SK-N-SH (cell line): ENCODE measurements at regions of chr7 and their contacts with region 1.

Region 1: GRCh38 chr7:5170251-5170650 is 19.8 kb upstream of the WIPI2 start:
- DNase-seq: no peak
- H3K4me3 ChIP-seq: no peak overlapping the region
- H3K27ac ChIP-seq: no peak overlapping the region
- H3K4me1 ChIP-seq: no peaks in the 10 kb centered on the region
- H3K27me3 ChIP-seq: no peaks in the 10 kb centered on the region
- CTCF ChIP-seq: no peak
- EP300 ChIP-seq: no peak
- RAD21 ChIP-seq: no peak

Region 2: GRCh38 chr7:4806983-4807597 is 363.2 kb before region 1 on chr7:
- CTCF ChIA-PET with region 1: no interaction called
- POLR2A ChIA-PET with region 1: no interaction called
- DNase-seq: no peak
- H3K4me3 ChIP-seq: no peak overlapping the region
- H3K27ac ChIP-seq: no peak overlapping the region
- H3K4me1 ChIP-seq: no peaks in the 10 kb centered on the region
- H3K27me3 ChIP-seq: no peaks in the 10 kb centered on the region
- CTCF ChIP-seq: no peak
- EP300 ChIP-seq: no peak
- RAD21 ChIP-seq: no peak

Region 3: GRCh38 chr7:5139998-5140397 is 30.3 kb before region 1 on chr7:
- CTCF ChIA-PET with region 1: interaction called, 51 read pairs
- POLR2A ChIA-PET with region 1: no interaction called
- DNase-seq: peak; percentile 81
- H3K4me3 ChIP-seq: no peak overlapping the region
- H3K27ac ChIP-seq: no peak overlapping the region
- H3K4me1 ChIP-seq: no peaks in the 10 kb centered on the region
- H3K27me3 ChIP-seq: peaks cover 7% of the 10 kb centered on the region; the same call in 1 of the 2 replicates
- CTCF ChIP-seq: peak; percentile 62
- EP300 ChIP-seq: no peak
- RAD21 ChIP-seq: peak; percentile 70

Region 4: DNA sequence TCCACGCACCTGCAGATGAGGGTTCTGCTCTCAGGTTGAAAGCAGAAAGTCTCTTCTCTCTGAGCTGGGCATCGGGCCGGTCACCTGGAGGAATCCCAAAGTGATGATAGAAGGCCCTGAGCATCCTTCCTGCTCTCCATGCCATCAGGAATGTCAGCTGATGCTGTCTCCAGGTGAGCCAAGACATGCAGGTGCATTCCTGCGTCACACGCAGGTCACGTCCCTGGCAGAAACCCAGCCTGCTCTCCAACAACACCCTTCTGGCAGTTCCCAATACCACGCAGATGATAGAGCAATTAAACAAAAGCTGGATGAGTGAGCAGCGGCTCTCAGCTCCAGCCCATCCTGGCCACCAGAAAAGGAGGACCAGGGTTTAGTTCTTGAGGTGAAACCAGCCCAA is 12.9 kb after region 1 on chr7:
- CTCF ChIA-PET with region 1: interaction called, 12 read pairs
- POLR2A ChIA-PET with region 1: no interaction called
- DNase-seq: no peak
- H3K4me3 ChIP-seq: no peak overlapping the region
- H3K27ac ChIP-seq: no peak overlapping the region
- H3K4me1 ChIP-seq: no peaks in the 10 kb centered on the region
- H3K27me3 ChIP-seq: no peaks in the 10 kb centered on the region; the same call in 1 of the 2 replicates
- CTCF ChIP-seq: no peak
- EP300 ChIP-seq: no peak
- RAD21 ChIP-seq: no peak

Region 5: GRCh38 chr7:5709347-5709950 is 539.2 kb after region 1 on chr7:
- CTCF ChIA-PET with region 1: no interaction called
- POLR2A ChIA-PET with region 1: no interaction called
- DNase-seq: no peak
- H3K4me3 ChIP-seq: no peak overlapping the region
- H3K27ac ChIP-seq: no peak overlapping the region
- H3K4me1 ChIP-seq: no peaks in the 10 kb centered on the region
- H3K27me3 ChIP-seq: no peaks in the 10 kb centered on the region
- CTCF ChIP-seq: no peak
- EP300 ChIP-seq: no peak
- RAD21 ChIP-seq: no peak